ENCODE measurements at regions of chr3 and their contacts with region 1.

Region 1: GRCh38 chr3:114213627-114214541 is 23.5 kb downstream of the ZNF80 start:
- DNase-seq: peak; percentile 88
- H3K4me3 Mint-ChIP-seq: no peak overlapping the region
- H3K27ac Mint-ChIP-seq: no peak overlapping the region
- H3K4me1 Mint-ChIP-seq: peaks cover 8% of the 10 kb centered on the region
- H3K27me3 Mint-ChIP-seq: no peaks in the 10 kb centered on the region

Region 2: GRCh38 chr3:113531826-113532697 is 681.8 kb before region 1 on chr3 and contains the start of gene SIDT1:
- CTCF ChIA-PET with region 1: no interaction called
- intact Hi-C with region 1: loop called (anchors 5 kb)
- DNase-seq: peak; percentile 82
- H3K4me3 Mint-ChIP-seq: peak within 1 kb of the TSS; percentile 97
- H3K27ac Mint-ChIP-seq: peak within 1 kb of the TSS; percentile 96
- H3K4me1 Mint-ChIP-seq: peaks cover 46% of the 10 kb centered on the region
- H3K27me3 Mint-ChIP-seq: no peaks in the 10 kb centered on the region
- total RNA-seq, gene SIDT1: 14.6 to 14.9 TPM

Region 3: GRCh38 chr3:114056130-114057010 is 157.5 kb before region 1 on chr3 and contains the starts of genes CCDC191 and QTRT2:
- CTCF ChIA-PET with region 1: no interaction called
- intact Hi-C with region 1: loop called (anchors 1 kb)
- DNase-seq: peak; percentile 100
- H3K4me3 Mint-ChIP-seq: peak within 1 kb of the TSS; percentile 97
- H3K27ac Mint-ChIP-seq: peak within 1 kb of the TSS; percentile 95
- H3K4me1 Mint-ChIP-seq: peaks cover 36% of the 10 kb centered on the region
- H3K27me3 Mint-ChIP-seq: no peaks in the 10 kb centered on the region
- total RNA-seq, gene CCDC191: 1.8 to 2.0 TPM
- total RNA-seq, gene QTRT2: 23.0 to 27.8 TPM

Region 4: GRCh38 chr3:114290911-114291901 is 77.3 kb after region 1 on chr3:
- CTCF ChIA-PET with region 1: interaction called, 11 read pairs
- intact Hi-C with region 1: loop called (anchors 1 kb)
- DNase-seq: peak; percentile 93
- H3K4me3 Mint-ChIP-seq: peak overlapping the region; percentile 33
- H3K27ac Mint-ChIP-seq: peak overlapping the region; percentile 85
- H3K4me1 Mint-ChIP-seq: peaks cover 7% of the 10 kb centered on the region
- H3K27me3 Mint-ChIP-seq: no peaks in the 10 kb centered on the region

Region 5: GRCh38 chr3:114504941-114505632 is 291.2 kb after region 1 on chr3:
- CTCF ChIA-PET with region 1: no interaction called
- intact Hi-C with region 1: loop called (anchors 1 kb)
- DNase-seq: peak; percentile 12
- H3K4me3 Mint-ChIP-seq: no peak overlapping the region
- H3K27ac Mint-ChIP-seq: no peak overlapping the region
- H3K4me1 Mint-ChIP-seq: peaks cover 44% of the 10 kb centered on the region
- H3K27me3 Mint-ChIP-seq: peaks cover 17% of the 10 kb centered on the region